Right cardiac atrium (tissue), 5 donors: ENCODE measurements at regions of chrX and their contacts with region 1.

Region 1: GRCh38 chrX:154714925-154715324 is 36.0 kb downstream of the GAB3 start:
- DNase-seq: no peak
- ATAC-seq: peak in 1 of 2 donors; percentile 65
- H3K4me3 ChIP-seq: no peak overlapping the region
- H3K27ac ChIP-seq: no peak overlapping the region
- H3K4me1 ChIP-seq: peaks cover 9% of the 10 kb centered on the region
- H3K27me3 ChIP-seq: no peaks in the 10 kb centered on the region

Region 2: DNA sequence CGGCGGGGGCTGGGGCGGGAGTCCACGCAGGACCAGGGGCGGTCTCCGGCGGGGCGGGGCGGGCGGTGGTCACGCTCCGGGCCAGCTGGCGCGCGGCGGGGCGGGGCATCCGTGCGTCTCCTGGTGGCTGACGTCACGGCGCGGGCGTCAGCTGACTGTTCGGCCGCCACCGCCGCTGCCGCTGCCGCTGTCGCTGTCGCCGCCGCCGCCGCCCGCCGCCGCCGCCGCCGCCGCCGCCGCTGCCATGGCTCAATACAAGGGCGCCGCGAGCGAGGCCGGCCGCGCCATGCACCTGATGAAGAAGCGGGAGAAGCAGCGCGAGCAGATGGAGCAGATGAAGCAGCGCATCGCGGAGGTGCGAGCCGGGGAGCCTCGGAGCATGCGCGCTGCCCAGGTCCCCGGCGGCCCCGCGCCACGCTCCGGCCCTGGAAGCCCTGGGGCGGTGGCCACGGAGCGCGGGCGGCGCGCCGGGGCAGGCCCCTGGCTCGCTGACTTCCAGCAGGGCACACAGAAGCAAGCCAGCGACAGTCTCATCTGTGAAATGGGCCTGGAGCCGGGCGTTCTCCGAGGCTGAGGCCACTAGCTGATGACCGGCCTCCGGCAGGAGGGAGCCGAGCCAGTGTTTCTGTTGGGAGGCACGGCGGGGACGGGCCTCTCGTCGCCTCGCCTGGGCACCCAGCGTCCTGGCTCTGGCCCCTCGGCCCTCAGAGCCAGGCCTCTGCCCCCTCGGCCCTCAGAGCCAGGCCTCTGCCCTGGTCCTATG is 270.8 kb before region 1 on chrX and contains the start of gene FAM50A:
- intact Hi-C with region 1: no loop called
- DNase-seq: peak; percentile 85 to 95 (median 93)
- ATAC-seq: peak; percentile 84 to 85
- H3K4me3 ChIP-seq: peak within 1 kb of the TSS; percentile 60
- H3K27ac ChIP-seq: peak within 1 kb of the TSS; percentile 95
- H3K4me1 ChIP-seq: peaks cover 7% of the 10 kb centered on the region
- H3K27me3 ChIP-seq: no peaks in the 10 kb centered on the region
- total RNA-seq, gene FAM50A: 48.6 to 54.0 (median 53.0) TPM

Region 3: GRCh38 chrX:154750301-154751202 is 35.6 kb after region 1 on chrX and contains the start of gene GAB3:
- intact Hi-C with region 1: loop called in 1 of 4 experiments (anchors 5 kb)
- DNase-seq: peak; percentile 56 to 78 (median 76)
- ATAC-seq: peak; percentile 69 to 80
- H3K4me3 ChIP-seq: peak within 1 kb of the TSS; percentile 90
- H3K27ac ChIP-seq: peak within 1 kb of the TSS; percentile 58
- H3K4me1 ChIP-seq: peaks cover 2% of the 10 kb centered on the region
- H3K27me3 ChIP-seq: no peaks in the 10 kb centered on the region
- total RNA-seq, gene GAB3: 7.8 to 14.4 (median 11.4) TPM

Region 4: DNA sequence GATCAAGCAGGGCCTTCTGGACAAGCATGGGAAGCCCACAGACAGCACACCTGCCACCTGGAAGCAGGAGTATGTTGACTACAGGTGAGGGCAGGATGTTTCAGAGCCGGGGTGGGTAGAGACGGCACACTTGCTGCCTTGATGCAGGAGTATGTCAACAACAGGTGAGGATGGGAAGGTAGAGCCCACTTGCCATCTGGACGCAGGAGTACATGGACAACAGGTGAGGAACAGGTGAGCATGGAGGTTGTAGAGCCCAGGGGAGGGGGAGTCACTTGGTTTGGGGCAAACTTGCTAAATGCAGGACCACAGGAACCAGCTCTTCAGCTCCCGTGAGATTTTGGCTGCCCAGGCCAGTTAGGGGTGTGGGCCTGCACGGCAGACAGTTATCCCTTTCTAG is 59.7 kb after region 1 on chrX:
- intact Hi-C with region 1: no loop called
- DNase-seq: no peak
- ATAC-seq: no peak
- H3K4me3 ChIP-seq: no peak overlapping the region
- H3K27ac ChIP-seq: no peak overlapping the region
- H3K4me1 ChIP-seq: peaks cover 1% of the 10 kb centered on the region
- H3K27me3 ChIP-seq: no peaks in the 10 kb centered on the region